MCF 10A (cell line): ENCODE measurements at regions of chr12 and their contacts with region 1.

Region 1: GRCh38 chr12:89019408-89020120 is 332.7 kb downstream of the DUSP6 start:
- DNase-seq: peak; percentile 90
- H3K4me3 Mint-ChIP-seq: no peak overlapping the region
- H3K27ac Mint-ChIP-seq: no peak overlapping the region
- H3K4me1 Mint-ChIP-seq: peaks cover 12% of the 10 kb centered on the region
- H3K27me3 Mint-ChIP-seq: no peaks in the 10 kb centered on the region
- CTCF ChIP-seq: peak; percentile 81

Region 2: GRCh38 chr12:88982694-88983093 is 36.9 kb before region 1 on chr12:
- CTCF ChIA-PET with region 1: no interaction called
- POLR2A ChIA-PET with region 1: no interaction called
- intact Hi-C with region 1: no loop called
- DNase-seq: no peak
- H3K4me3 Mint-ChIP-seq: no peak overlapping the region
- H3K27ac Mint-ChIP-seq: no peak overlapping the region
- H3K4me1 Mint-ChIP-seq: no peaks in the 10 kb centered on the region
- H3K27me3 Mint-ChIP-seq: no peaks in the 10 kb centered on the region
- CTCF ChIP-seq: no peak

Region 3: GRCh38 chr12:89040146-89040964 is 20.8 kb after region 1 on chr12:
- CTCF ChIA-PET with region 1: interaction called, 11 read pairs
- POLR2A ChIA-PET with region 1: no interaction called
- intact Hi-C with region 1: no loop called
- DNase-seq: no peak
- H3K4me3 Mint-ChIP-seq: no peak overlapping the region
- H3K27ac Mint-ChIP-seq: no peak overlapping the region
- H3K4me1 Mint-ChIP-seq: no peaks in the 10 kb centered on the region
- H3K27me3 Mint-ChIP-seq: no peaks in the 10 kb centered on the region
- CTCF ChIP-seq: no peak

Region 4: DNA sequence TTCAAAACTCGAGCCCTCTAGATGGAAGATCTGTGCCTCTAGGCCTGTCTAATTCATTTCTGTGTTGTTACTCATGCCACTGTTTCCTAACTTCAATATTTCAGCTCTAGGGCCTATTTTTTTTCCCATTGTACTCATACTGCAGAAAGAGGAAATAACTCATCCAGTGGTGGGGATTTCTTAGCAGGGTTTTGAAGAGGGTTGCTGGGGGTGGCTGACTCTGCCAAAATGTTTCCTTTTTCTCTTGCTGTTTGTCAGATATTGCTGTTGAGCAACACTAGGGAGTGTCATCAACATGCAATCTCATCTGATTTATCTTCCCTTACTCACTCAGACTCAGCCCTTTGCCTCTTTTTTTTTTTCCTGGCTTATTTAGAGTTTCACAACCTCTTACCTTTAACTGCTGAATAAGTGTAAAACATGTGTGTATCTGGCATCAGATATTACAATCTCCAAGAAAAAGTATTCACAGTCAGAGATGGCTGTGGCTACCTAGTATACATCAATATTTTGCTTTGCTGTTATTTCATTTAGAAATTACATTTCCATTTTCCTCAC is 143.2 kb after region 1 on chr12:
- CTCF ChIA-PET with region 1: interaction called, 3 read pairs
- POLR2A ChIA-PET with region 1: no interaction called
- intact Hi-C with region 1: loop called (anchors 1 kb)
- DNase-seq: peak; percentile 99
- H3K4me3 Mint-ChIP-seq: no peak overlapping the region
- H3K27ac Mint-ChIP-seq: no peak overlapping the region
- H3K4me1 Mint-ChIP-seq: peaks cover 17% of the 10 kb centered on the region
- H3K27me3 Mint-ChIP-seq: no peaks in the 10 kb centered on the region
- CTCF ChIP-seq: no peak

Region 5: DNA sequence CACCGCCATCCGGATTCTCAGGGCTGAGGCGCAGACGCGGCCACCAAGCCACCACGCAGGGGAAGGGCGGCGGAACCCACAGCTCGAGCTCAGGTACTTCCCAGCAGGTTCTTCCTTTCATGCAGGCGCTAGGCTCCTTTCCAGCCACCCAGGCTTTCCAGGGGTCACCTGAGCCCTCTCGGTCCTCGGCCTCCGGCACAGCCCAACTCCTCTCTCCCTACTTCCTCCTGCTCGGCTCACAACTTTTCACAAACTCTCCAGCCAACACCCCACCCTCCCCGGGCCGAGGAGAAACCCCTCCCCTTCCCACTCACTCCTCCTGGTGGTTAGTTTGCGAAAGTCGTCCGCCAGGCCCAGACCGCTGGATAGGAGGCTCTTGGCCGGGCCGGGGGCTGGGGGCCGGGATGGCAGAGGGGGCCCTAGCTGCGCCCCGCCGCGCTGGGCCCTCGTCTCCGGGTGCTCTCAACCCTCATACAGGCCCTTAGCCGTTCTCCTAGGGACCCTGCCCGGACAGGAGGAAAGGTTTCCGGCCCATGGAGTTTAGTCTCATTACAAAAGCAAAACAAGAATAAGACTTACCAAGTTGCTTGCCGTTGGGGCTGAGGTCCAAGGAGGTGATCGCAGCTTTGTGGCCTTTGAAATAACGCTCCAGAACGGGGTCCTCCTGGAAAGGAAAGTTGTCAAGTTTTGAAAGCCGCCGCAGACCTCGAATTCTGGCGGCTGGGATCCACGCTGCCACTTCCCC is 505.1 kb after region 1 on chr12 and contains the start of gene GALNT4:
- CTCF ChIA-PET with region 1: interaction called, 52 read pairs
- POLR2A ChIA-PET with region 1: interaction called, 6 read pairs
- intact Hi-C with region 1: loop called (anchors 1 kb)
- DNase-seq: peak; percentile 91
- H3K4me3 Mint-ChIP-seq: peak within 1 kb of the TSS; percentile 99
- H3K27ac Mint-ChIP-seq: peak within 1 kb of the TSS; percentile 79
- H3K4me1 Mint-ChIP-seq: peaks cover 29% of the 10 kb centered on the region
- H3K27me3 Mint-ChIP-seq: no peaks in the 10 kb centered on the region
- CTCF ChIP-seq: peak; percentile 73
- total RNA-seq, gene GALNT4: 2.6 and 2.8 TPM in 2 replicates